Ovary (tissue), 10 donors: ENCODE measurements at regions of chr11 and their contacts with region 1.

Region 1: GRCh38 chr11:74388678-74389327 is 9.4 kb downstream of the PGM2L1 start:
- DNase-seq: peak in 4 of 5 donors; percentile 25 to 78 (median 50)
- H3K4me3 ChIP-seq: no peak overlapping the region
- H3K27ac ChIP-seq: no peak overlapping the region
- H3K4me1 ChIP-seq: no peaks in the 10 kb centered on the region
- H3K27me3 ChIP-seq: no peaks in the 10 kb centered on the region
- CTCF ChIP-seq: peak in 2 of 3 donors; percentile 63 to 73
- EP300 ChIP-seq: no peak
- POLR2A ChIP-seq: no peak

Region 2: GRCh38 chr11:74570266-74571061 is 181.7 kb after region 1 on chr11:
- intact Hi-C with region 1: loop called in 1 of 4 experiments (anchors 5 kb)
- DNase-seq: peak in 4 of 5 donors; percentile 30 to 58 (median 38)
- H3K4me3 ChIP-seq: no peak overlapping the region
- H3K27ac ChIP-seq: no peak overlapping the region
- H3K4me1 ChIP-seq: no peaks in the 10 kb centered on the region
- H3K27me3 ChIP-seq: no peaks in the 10 kb centered on the region
- CTCF ChIP-seq: peak; percentile 23 to 68 (median 59)
- EP300 ChIP-seq: no peak
- POLR2A ChIP-seq: no peak